AG04450 (cell line): ENCODE measurements at regions of chr17 and their contacts with region 1.

Region 1: DNA sequence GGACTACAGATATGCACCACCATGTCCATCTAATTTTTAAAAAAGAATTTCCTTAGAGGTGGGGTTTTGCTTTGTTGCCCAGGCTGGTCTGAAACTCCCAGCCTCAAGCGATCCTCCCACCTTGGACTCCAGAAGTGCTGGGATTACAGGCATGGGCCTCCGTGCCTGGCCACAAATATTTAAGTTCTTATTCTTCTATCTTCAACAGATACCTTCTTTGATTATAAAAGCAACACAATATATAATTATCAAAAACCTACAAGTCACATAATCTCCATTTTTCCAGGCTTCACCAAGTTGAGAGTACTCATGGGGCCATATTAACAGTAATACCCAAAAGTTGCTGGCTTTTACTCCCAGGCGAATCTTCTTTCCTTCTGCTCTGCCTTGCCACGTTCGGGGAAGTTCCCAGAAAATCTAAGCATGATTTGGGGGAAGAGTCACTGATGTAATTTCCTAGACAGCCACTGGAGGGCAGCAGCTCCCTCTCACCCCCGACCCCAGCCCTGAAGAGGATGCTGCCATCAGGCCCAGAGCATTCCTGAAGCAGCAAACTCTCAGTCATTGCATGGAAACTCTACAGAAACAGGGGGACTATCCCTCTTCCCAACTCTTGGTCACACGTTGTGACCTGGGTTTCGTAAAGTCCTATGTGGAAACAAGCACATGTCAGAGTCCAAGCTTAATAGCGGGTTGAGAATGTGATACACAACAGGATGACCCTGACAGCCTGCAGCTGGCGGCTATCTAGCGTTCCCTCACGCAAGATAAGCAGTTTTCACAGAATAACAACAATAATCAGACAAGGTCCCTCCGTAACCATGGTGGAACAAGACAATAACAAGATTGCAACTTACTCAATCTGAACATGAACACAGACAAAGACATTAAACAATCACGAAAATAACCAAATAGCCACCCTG is 43.9 kb upstream of the DHX40 start:
- DNase-seq: peak; percentile 21
- H3K4me3 ChIP-seq: no peak overlapping the region
- H3K27ac ChIP-seq: no peak overlapping the region
- H3K27me3 ChIP-seq: peaks cover 4% of the 10 kb centered on the region
- CTCF ChIP-seq: peak; percentile 85

Region 2: GRCh38 chr17:59534598-59534997 is 13.1 kb after region 1 on chr17:
- CTCF ChIA-PET with region 1: interaction called, 15 read pairs
- POLR2A ChIA-PET with region 1: no interaction called
- DNase-seq: no peak
- H3K4me3 ChIP-seq: no peak overlapping the region
- H3K27ac ChIP-seq: no peak overlapping the region
- H3K27me3 ChIP-seq: peaks cover 6% of the 10 kb centered on the region
- CTCF ChIP-seq: peak; percentile 12; the same call in 1 of the 2 replicates

Region 3: DNA sequence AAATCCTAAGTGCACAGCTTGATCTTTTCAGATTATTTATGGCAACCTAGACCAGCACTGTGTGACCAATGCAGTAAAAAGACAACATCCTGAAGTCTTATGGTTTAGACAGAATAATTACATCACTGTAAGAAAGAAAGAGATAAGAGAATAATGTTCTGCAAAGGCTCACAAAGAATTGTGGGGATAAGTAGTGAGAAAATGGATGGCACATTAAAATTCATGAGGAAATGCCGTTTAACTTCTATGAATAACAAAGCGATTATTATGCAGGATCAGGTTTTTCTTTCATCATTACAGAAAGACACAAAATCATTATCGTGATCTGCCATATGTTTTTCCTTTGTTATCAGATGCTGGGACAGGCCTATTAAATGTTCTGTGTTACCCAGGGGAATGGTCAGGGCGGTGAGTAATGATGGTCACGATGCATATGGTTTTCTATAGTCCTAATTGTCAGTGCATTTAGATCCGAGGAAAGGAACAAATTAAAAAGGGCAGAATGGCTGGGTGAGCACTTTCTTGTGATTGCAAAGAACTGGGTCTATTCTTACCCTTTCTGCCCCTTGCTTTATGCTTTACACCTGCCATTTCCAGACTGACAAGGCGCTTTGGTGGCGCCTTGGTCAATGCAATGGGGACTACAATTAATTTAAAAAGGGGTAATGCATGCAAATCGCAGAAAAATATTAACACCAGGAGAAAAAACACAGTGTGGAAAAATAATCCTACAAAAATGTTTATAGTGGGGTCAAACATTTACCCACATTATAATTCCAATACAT is 25.9 kb after region 1 on chr17:
- CTCF ChIA-PET with region 1: no interaction called
- POLR2A ChIA-PET with region 1: no interaction called
- DNase-seq: no peak
- H3K4me3 ChIP-seq: no peak overlapping the region
- H3K27ac ChIP-seq: no peak overlapping the region
- H3K27me3 ChIP-seq: peaks cover 4% of the 10 kb centered on the region
- CTCF ChIP-seq: no peak

Region 4: GRCh38 chr17:59561042-59561441 is 39.6 kb after region 1 on chr17:
- CTCF ChIA-PET with region 1: interaction called, 22 read pairs
- POLR2A ChIA-PET with region 1: interaction called, 6 read pairs
- DNase-seq: no peak
- H3K4me3 ChIP-seq: no peak overlapping the region
- H3K27ac ChIP-seq: no peak overlapping the region
- H3K27me3 ChIP-seq: peaks cover 3% of the 10 kb centered on the region
- CTCF ChIP-seq: peak; percentile 42